ENCODE measurements at regions of chr14 and their contacts with region 1.

Region 1: DNA sequence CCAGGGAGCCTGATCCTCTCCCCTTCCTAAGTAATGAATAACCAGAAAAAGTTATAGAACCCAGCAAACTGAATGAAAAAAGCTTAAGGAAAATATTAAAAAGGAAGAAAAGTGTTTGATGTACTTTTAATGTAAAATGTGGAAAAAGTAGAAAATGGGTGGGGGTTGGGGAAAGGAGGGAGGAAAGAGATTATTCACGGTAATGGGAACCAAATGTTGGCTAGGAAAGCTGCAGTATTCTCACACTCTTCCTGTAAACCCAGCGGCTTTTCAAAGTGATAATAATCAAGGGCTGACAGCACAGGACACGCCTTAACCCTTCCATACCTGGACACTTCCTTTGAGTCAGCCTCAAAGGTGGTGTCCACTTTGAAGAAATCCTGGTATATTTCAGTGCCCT is 139.2 kb downstream of the TGFB3 start:
- DNase-seq: no peak
- ATAC-seq: no peak
- H3K4me3 ChIP-seq: no peak overlapping the region
- H3K27ac ChIP-seq: no peak overlapping the region
- H3K4me1 ChIP-seq: no peaks in the 10 kb centered on the region
- H3K27me3 ChIP-seq: no peaks in the 10 kb centered on the region
- CTCF ChIP-seq: no peak

Region 2: DNA sequence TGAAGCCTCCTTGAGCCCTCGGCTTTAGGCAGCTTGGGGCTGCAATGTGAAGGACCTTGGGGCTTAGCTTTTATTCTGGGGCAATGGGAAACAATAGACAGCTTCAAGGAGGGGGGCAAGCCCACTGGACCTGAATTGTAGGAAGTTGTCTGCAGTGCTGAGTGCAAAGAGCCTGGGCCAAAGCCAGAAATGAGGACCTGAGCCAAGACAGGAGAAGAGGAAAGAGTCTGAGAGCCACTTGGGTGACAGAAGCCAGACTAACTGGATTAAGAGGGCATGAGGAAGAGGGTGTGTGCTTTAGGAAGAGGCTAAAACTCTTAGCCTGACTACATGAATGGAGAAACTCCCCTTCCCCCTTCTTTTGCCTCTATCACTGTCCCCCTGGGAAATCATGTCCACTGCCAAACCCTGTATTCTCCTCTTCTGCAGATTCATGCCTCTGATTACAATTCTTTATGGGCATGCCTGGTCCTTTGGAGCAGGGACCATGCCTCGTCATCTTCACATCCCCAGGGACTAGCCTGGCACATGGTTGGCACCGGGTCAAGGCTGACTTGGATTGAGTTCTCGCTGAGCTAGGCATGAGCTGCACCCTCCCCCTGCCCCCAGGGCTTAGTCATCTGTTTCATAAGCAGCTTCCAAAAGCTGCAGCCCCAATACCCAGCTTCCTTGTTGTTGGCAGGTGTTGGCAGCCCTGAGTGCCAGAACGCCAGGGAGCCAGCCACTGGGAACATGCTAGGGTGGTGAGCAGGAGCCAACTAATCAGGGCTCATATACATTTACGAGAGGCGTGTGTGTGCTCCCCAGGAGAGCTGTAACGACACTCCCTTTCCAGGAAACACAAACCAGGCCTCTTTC is 442.5 kb before region 1 on chr14:
- intact Hi-C with region 1: no loop called
- DNase-seq: peak; percentile 93 to 96
- ATAC-seq: peak; percentile 95 to 97 (median 96)
- H3K4me3 ChIP-seq: peak overlapping the region; percentile 26
- H3K27ac ChIP-seq: peak overlapping the region; percentile 86
- H3K4me1 ChIP-seq: peaks cover 19% of the 10 kb centered on the region
- H3K27me3 ChIP-seq: no peaks in the 10 kb centered on the region
- CTCF ChIP-seq: no peak

Region 3: GRCh38 chr14:75884198-75884611 is 41.7 kb after region 1 on chr14:
- intact Hi-C with region 1: loop called in 1 of 2 experiments (anchors 5 kb)
- DNase-seq: no peak
- ATAC-seq: no peak
- H3K4me3 ChIP-seq: no peak overlapping the region
- H3K27ac ChIP-seq: no peak overlapping the region
- H3K4me1 ChIP-seq: peaks cover 14% of the 10 kb centered on the region
- H3K27me3 ChIP-seq: no peaks in the 10 kb centered on the region
- CTCF ChIP-seq: peak; percentile 11

Measured in psoas muscle (tissue), 8 donors.